Left cardiac atrium (tissue), 4 donors: ENCODE measurements at regions of chr22 and their contacts with region 1.

Region 1: DNA sequence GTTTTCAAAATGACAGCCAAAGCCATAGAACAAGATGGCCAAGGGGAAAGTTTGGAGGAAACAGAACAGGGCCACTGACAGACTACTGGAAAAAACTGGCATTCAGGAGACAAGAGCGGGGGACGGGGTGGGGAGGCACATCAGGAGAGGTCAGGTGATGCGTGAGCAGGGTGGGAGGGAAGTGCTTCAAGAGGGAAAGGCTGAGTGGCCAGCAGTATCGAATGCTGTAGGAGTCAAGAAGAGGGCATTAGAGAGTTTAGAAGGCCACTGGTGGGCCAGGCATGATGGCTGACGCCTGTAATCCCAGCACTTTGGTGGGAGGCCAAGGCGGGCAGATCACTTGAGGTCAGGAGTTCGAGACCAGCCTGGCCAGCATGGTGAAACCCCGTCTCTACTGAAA is 8.2 kb downstream of the GTPBP1 start:
- DNase-seq: no peak
- ATAC-seq: no peak

Region 2: GRCh38 chr22:38744981-38745380 is 31.1 kb after region 1 on chr22:
- intact Hi-C with region 1: loop called in 1 of 2 experiments (anchors 5 kb)
- DNase-seq: no peak
- ATAC-seq: no peak

Region 3: DNA sequence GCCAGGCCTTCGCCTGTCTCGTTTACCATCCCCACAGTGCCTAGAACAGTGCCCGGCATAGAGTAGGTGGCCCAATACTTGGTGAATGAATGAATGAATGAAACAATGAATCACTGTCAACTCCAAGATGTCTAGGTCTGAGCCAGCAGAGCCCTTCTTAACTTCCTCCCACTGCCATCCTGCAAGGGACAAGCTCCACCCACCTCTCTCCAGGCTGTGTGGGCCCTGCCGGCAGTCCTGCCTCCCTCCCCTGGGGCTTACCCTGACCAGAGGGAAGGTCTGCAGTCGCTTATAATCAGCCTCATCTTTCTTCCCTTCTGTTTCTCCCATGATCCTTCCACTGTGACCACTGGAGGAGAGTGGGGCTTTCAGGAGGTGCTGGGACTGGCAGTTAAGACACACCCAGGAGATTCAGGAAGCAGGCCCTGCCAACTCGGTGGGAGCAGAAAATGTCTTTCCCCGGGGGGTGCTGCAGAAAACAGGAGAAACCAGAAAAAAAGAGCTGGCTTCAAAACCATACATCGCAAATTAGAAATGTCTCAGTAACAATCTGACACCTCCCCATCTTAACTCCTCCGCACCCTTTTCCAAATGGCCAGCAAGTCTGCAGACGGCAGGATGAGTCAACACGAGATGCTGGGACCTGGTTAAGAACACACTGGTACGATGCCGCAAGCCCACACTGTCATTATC is 68.6 kb after region 1 on chr22:
- intact Hi-C with region 1: no loop called
- DNase-seq: no peak
- ATAC-seq: peak in 1 of 2 donors; percentile 49